ENCODE measurements at regions of chr7 and their contacts with region 1.

Region 1: GRCh38 chr7:121107923-121108498 is 119.5 kb downstream of the CPED1 start:
- DNase-seq: no peak
- ATAC-seq: peak; percentile 85
- H3K4me3 Mint-ChIP-seq: no peak overlapping the region
- H3K27ac Mint-ChIP-seq: no peak overlapping the region
- H3K4me1 Mint-ChIP-seq: no peaks in the 10 kb centered on the region
- H3K27me3 Mint-ChIP-seq: peaks cover 34% of the 10 kb centered on the region

Region 2: DNA sequence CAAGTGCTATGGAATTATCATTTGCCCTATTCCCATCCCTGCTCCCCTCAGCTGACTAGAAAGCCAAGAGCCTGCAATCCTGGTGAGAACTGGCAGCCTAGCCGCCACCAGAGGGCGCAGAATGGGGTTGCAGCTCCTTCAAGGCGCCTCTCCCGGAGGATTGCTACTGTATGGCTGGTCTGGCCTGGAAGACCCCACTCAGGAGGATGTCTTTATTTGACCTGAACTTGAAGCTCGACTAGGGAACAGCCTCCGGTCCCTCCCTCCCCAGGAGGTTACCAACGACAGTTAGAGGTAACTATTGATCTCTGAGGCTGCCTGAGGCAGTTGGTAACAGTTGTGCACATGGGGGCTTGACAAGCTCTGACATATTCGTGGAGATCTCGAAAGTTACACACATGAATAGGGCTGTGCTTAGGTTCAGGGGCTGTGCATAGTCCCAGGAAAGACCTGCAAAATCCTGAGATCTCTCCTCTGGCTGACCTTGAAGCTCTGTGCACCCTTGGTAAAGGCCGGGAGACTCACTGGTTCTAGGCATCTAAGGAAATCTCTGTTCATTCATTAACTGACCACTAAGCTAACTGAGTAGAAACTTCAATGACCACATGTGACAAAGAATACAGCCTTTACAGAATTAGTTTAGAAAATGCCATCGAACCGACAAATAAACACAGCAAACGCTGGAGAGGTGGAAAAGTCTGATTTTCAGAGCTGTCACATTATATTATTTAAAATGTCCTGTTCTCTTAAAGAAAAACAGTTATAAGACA is 315.7 kb before region 1 on chr7:
- CTCF ChIA-PET with region 1: interaction called, 13 read pairs
- DNase-seq: peak; percentile 67
- ATAC-seq: peak; percentile 76
- H3K4me3 Mint-ChIP-seq: no peak overlapping the region
- H3K27ac Mint-ChIP-seq: no peak overlapping the region
- H3K4me1 Mint-ChIP-seq: peaks cover 2% of the 10 kb centered on the region
- H3K27me3 Mint-ChIP-seq: peaks cover 13% of the 10 kb centered on the region